CD8-positive, alpha-beta T cell (primary cell): ENCODE measurements at regions of chr19 and their contacts with region 1.

Region 1: DNA sequence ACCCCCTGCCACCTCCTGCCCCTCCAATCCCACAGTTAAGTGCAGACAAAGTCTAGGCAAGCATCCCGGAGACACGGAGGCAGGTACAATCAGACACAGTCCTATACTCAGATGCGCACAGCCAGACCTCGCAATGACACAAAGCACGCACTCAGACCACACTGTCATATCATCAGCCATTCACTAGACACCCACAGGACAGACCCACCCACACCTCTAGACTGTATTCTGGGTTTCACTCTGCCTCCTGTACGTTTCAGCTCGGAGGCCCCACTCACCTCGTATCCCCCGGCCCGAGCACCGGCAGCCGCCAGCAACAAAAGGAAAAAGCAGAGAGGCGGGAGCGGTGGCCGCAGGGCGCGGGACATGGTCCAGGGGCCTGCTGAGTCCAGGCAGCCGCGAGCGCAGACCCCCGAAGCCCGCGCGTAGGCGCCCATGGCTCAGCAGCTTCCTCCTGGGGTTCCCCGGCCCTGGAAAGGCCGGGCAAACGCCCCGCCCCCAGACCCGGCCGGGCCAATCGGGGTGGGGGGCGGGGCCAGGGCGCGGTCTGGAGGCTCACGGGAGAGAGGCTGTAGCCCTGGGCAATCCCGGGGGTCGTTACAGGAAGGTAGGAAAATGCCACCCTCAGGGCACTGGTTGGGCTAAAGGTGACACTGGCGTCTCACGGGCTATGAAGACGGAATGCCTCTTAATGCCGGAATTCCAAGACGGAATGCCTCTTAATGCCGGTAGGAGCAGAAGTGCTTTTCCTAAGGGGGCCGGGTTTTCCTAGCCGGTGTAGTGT is at the starts of genes MAN2B1 and WDR83:
- DNase-seq: peak; percentile 57 to 92 (median 77)
- ATAC-seq: peak; percentile 72
- H3K4me3 ChIP-seq: peak within 1 kb of the TSS; percentile 82 to 84
- H3K4me3 Mint-ChIP-seq: peak within 1 kb of the TSS; percentile 90
- H3K27ac ChIP-seq: peak within 1 kb of the TSS; percentile 69 to 99
- H3K27ac Mint-ChIP-seq: peak within 1 kb of the TSS; percentile 94
- H3K4me1 ChIP-seq: peaks cover 46% of the 10 kb centered on the region
- H3K4me1 Mint-ChIP-seq: peaks cover 54% of the 10 kb centered on the region
- H3K27me3 ChIP-seq: no peaks in the 10 kb centered on the region
- H3K27me3 Mint-ChIP-seq: no peaks in the 10 kb centered on the region
- CTCF ChIP-seq: no peak
- total RNA-seq, gene MAN2B1: 74.8 to 82.2 TPM
- total RNA-seq, gene WDR83: 7.4 to 10.0 TPM

Region 2: GRCh38 chr19:12202250-12202649 is 464.2 kb before region 1 on chr19:
- CTCF ChIA-PET with region 1: no interaction called
- POLR2A ChIA-PET with region 1: no interaction called
- intact Hi-C with region 1: loop called in 1 of 2 experiments (anchors 5 kb)
- DNase-seq: peak; percentile 28 to 77 (median 62)
- ATAC-seq: peak; percentile 83
- H3K4me3 ChIP-seq: no peak overlapping the region
- H3K4me3 Mint-ChIP-seq: no peak overlapping the region
- H3K27ac ChIP-seq: no peak overlapping the region
- H3K27ac Mint-ChIP-seq: no peak overlapping the region
- H3K4me1 ChIP-seq: peaks cover 8% of the 10 kb centered on the region
- H3K4me1 Mint-ChIP-seq: peaks cover 18% of the 10 kb centered on the region
- H3K27me3 ChIP-seq: no peaks in the 10 kb centered on the region
- H3K27me3 Mint-ChIP-seq: no peaks in the 10 kb centered on the region
- CTCF ChIP-seq: peak; percentile 36

Region 3: GRCh38 chr19:12610540-12611360 is 55.7 kb before region 1 on chr19 and contains the starts of genes ZNF490 and ZNF791:
- CTCF ChIA-PET with region 1: interaction called, 13 read pairs
- POLR2A ChIA-PET with region 1: interaction called, 5 read pairs
- intact Hi-C with region 1: loop called (anchors 1 kb)
- DNase-seq: peak; percentile 93 to 98 (median 96)
- ATAC-seq: peak; percentile 86
- H3K4me3 ChIP-seq: peak within 1 kb of the TSS; percentile 83 to 85
- H3K4me3 Mint-ChIP-seq: peak within 1 kb of the TSS; percentile 100
- H3K27ac ChIP-seq: peak within 1 kb of the TSS; percentile 87 to 90
- H3K27ac Mint-ChIP-seq: peak within 1 kb of the TSS; percentile 100
- H3K4me1 ChIP-seq: peaks cover 44% of the 10 kb centered on the region
- H3K4me1 Mint-ChIP-seq: peaks cover 47% of the 10 kb centered on the region
- H3K27me3 ChIP-seq: no peaks in the 10 kb centered on the region
- H3K27me3 Mint-ChIP-seq: no peaks in the 10 kb centered on the region
- CTCF ChIP-seq: no peak
- total RNA-seq, gene ZNF490: 5.1 to 7.0 TPM
- total RNA-seq, gene ZNF791: 61.0 to 67.0 TPM

Region 4: GRCh38 chr19:12639901-12640613 is 26.4 kb before region 1 on chr19:
- CTCF ChIA-PET with region 1: interaction called, 24 read pairs
- POLR2A ChIA-PET with region 1: interaction called, 3 read pairs
- intact Hi-C with region 1: no loop called
- DNase-seq: peak; percentile 64 to 89 (median 84)
- ATAC-seq: peak; percentile 81
- H3K4me3 ChIP-seq: peak overlapping the region; percentile 23 to 38
- H3K4me3 Mint-ChIP-seq: peak overlapping the region; percentile 79
- H3K27ac ChIP-seq: peak overlapping the region; percentile 8 to 15
- H3K27ac Mint-ChIP-seq: peak overlapping the region; percentile 70
- H3K4me1 ChIP-seq: peaks cover 18% of the 10 kb centered on the region
- H3K4me1 Mint-ChIP-seq: peaks cover 21% of the 10 kb centered on the region
- H3K27me3 ChIP-seq: no peaks in the 10 kb centered on the region
- H3K27me3 Mint-ChIP-seq: no peaks in the 10 kb centered on the region
- CTCF ChIP-seq: peak; percentile 68